ENCODE measurements at regions of chr2 and their contacts with region 1.

Region 1: DNA sequence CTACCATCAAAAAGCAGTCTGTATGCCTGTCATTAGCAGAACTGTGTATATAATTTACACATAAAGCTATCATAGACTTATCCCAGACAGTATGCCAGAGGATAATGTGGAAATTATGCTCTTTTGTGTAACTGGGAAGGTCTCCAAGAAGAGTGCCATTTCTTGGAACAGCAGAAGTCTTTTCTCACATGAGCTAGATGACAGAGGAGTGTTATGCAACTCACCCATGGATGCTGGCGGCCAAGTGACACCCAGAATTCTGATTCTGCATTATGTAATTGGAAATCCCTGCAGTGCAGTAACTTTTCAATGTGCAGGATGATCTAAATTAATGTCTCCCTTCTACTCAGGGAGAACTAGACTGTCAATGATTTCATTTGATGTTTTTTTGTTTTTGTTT is 160.0 kb downstream of the UBE2E3 start:
- DNase-seq: peak in 2 of 9 experiments; percentile 60 to 73
- ATAC-seq: peak; percentile 15
- H3K4me3 ChIP-seq: no peak overlapping the region
- H3K4me3 Mint-ChIP-seq: peak overlapping the region; percentile 80
- H3K27ac ChIP-seq: peak overlapping the region; percentile 58 to 73
- H3K27ac Mint-ChIP-seq: peak overlapping the region; percentile 99
- H3K4me1 ChIP-seq: peaks cover 62% of the 10 kb centered on the region
- H3K4me1 Mint-ChIP-seq: peaks cover 79% of the 10 kb centered on the region
- H3K27me3 ChIP-seq: no peaks in the 10 kb centered on the region
- H3K27me3 Mint-ChIP-seq: no peaks in the 10 kb centered on the region
- CTCF ChIP-seq: no peak

Region 2: DNA sequence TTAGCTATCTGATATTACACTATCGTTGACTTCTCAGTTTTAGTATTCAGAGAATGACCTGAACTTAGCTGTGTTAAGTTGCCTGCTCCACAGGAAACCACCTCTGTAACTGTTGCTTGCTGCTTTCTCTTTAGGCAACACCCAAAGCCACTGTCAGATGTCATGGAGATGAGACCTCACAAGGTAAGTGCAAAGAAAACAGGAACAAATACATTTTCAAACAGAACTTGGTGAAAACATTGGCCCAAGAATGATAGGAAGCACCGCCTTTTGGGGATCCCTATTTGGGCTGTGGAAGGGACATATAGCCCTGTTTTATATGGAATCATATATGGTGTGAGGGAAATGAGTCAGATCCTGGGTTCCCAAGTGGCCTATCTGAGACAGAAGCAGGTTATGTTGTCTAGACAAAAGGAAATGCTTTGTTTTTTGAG is 16.6 kb before region 1 on chr2:
- CTCF ChIA-PET with region 1: interaction called, 6 read pairs
- POLR2A ChIA-PET with region 1: interaction called, 15 read pairs
- intact Hi-C with region 1: loop called (anchors 1 to 2 kb)
- DNase-seq: peak; percentile 25 to 94 (median 60)
- ATAC-seq: peak; percentile 93
- H3K4me3 ChIP-seq: peak overlapping the region; percentile 31 to 42
- H3K4me3 Mint-ChIP-seq: peak overlapping the region; percentile 81
- H3K27ac ChIP-seq: peak overlapping the region; percentile 84 to 96
- H3K27ac Mint-ChIP-seq: peak overlapping the region; percentile 99
- H3K4me1 ChIP-seq: peaks cover 66% of the 10 kb centered on the region
- H3K4me1 Mint-ChIP-seq: peaks cover 74% of the 10 kb centered on the region
- H3K27me3 ChIP-seq: no peaks in the 10 kb centered on the region
- H3K27me3 Mint-ChIP-seq: no peaks in the 10 kb centered on the region
- CTCF ChIP-seq: no peak

Region 3: GRCh38 chr2:181153886-181154285 is 13.5 kb after region 1 on chr2:
- CTCF ChIA-PET with region 1: interaction called, 6 read pairs
- POLR2A ChIA-PET with region 1: interaction called, 8 read pairs
- intact Hi-C with region 1: loop called in 1 of 2 experiments (anchors 1 kb)
- DNase-seq: no peak
- ATAC-seq: no peak
- H3K4me3 ChIP-seq: no peak overlapping the region
- H3K4me3 Mint-ChIP-seq: no peak overlapping the region
- H3K27ac ChIP-seq: no peak overlapping the region
- H3K27ac Mint-ChIP-seq: peak overlapping the region; percentile 81
- H3K4me1 ChIP-seq: peaks cover 32% of the 10 kb centered on the region
- H3K4me1 Mint-ChIP-seq: peaks cover 53% of the 10 kb centered on the region
- H3K27me3 ChIP-seq: no peaks in the 10 kb centered on the region
- H3K27me3 Mint-ChIP-seq: no peaks in the 10 kb centered on the region
- CTCF ChIP-seq: no peak

Region 4: GRCh38 chr2:181178823-181179412 is 38.5 kb after region 1 on chr2:
- CTCF ChIA-PET with region 1: interaction called, 3 read pairs
- POLR2A ChIA-PET with region 1: no interaction called
- intact Hi-C with region 1: loop called in 1 of 2 experiments (anchors 5 kb)
- DNase-seq: peak in 5 of 9 experiments; percentile 34 to 73 (median 39)
- ATAC-seq: peak; percentile 79
- H3K4me3 ChIP-seq: no peak overlapping the region
- H3K4me3 Mint-ChIP-seq: no peak overlapping the region
- H3K27ac ChIP-seq: peak overlapping the region in 1 of 2 experiments; percentile 34
- H3K27ac Mint-ChIP-seq: peak overlapping the region; percentile 47
- H3K4me1 ChIP-seq: peaks cover 16% of the 10 kb centered on the region
- H3K4me1 Mint-ChIP-seq: peaks cover 54% of the 10 kb centered on the region
- H3K27me3 ChIP-seq: no peaks in the 10 kb centered on the region
- H3K27me3 Mint-ChIP-seq: no peaks in the 10 kb centered on the region
- CTCF ChIP-seq: peak; percentile 64